ENCODE measurements at regions of chr6 and their contacts with region 1.

Region 1: DNA sequence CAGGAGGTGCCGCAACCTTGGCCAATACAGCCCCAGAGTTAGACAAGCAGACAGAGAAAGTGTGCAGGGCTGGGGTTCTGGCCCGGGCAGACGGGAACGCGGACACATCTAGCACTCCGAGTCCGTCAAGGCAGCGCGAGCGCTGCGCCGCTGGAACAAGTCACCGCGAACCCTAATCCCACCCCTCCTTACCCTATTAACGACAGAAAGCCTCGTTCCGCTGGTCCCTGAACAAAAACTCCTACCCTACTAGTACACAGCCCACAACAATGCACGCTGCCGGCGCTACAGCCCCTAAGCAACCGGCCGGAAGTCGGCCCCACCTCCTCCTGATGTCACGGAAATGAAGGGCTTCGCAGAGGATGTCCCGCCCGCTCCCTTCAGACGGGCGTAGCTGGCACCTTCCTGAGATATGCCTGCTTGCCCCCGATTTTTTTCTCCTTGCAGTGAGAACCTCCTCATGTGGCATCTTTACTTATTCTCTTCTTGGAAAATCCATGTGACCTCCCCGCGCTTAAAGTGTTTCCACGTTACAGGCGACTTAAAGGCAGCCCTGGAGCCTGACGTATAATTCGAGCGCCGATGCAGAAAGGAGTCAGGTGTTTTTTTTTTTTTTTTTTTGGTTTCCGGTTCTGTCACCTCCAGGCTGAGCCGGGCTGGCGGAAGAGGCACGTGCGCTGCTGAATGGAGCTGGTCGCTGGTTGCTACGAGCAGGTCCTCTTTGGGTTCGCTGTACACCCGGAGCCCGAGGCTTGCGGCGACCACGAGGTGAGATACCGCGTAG is at the starts of genes C6orf52 and PAK1IP1:
- DNase-seq: peak; percentile 92
- H3K4me3 ChIP-seq: peak within 1 kb of the TSS; percentile 78
- H3K27ac ChIP-seq: peak within 1 kb of the TSS; percentile 98
- H3K4me1 ChIP-seq: peaks cover 40% of the 10 kb centered on the region
- H3K27me3 ChIP-seq: no peaks in the 10 kb centered on the region
- CTCF ChIP-seq: no peak
- total RNA-seq, gene C6orf52: 1.5 TPM
- total RNA-seq, gene PAK1IP1: 11.2 TPM

Region 2: GRCh38 chr6:10510592-10511367 is 183.7 kb before region 1 on chr6:
- intact Hi-C with region 1: loop called (anchors 10 kb)
- DNase-seq: peak; percentile 57
- H3K4me3 ChIP-seq: peak overlapping the region; percentile 29
- H3K27ac ChIP-seq: peak overlapping the region; percentile 88
- H3K4me1 ChIP-seq: peaks cover 11% of the 10 kb centered on the region
- H3K27me3 ChIP-seq: no peaks in the 10 kb centered on the region
- CTCF ChIP-seq: peak; percentile 76

Region 3: GRCh38 chr6:10643201-10643651 is 51.3 kb before region 1 on chr6:
- intact Hi-C with region 1: no loop called
- DNase-seq: no peak
- H3K4me3 ChIP-seq: no peak overlapping the region
- H3K27ac ChIP-seq: no peak overlapping the region
- H3K4me1 ChIP-seq: no peaks in the 10 kb centered on the region
- H3K27me3 ChIP-seq: no peaks in the 10 kb centered on the region
- CTCF ChIP-seq: no peak

Region 4: GRCh38 chr6:10824297-10824696 is 129.8 kb after region 1 on chr6:
- intact Hi-C with region 1: no loop called
- DNase-seq: no peak
- H3K4me3 ChIP-seq: no peak overlapping the region
- H3K27ac ChIP-seq: no peak overlapping the region
- H3K4me1 ChIP-seq: no peaks in the 10 kb centered on the region
- H3K27me3 ChIP-seq: no peaks in the 10 kb centered on the region
- CTCF ChIP-seq: no peak

Measured in left ventricle myocardium inferior (tissue), 1 donor.